Activated B cell treated with CpG ODN at 0.5 μM for 24 hours (primary cell): ENCODE measurements at regions of chr10 and their contacts with region 1.

Region 1: DNA sequence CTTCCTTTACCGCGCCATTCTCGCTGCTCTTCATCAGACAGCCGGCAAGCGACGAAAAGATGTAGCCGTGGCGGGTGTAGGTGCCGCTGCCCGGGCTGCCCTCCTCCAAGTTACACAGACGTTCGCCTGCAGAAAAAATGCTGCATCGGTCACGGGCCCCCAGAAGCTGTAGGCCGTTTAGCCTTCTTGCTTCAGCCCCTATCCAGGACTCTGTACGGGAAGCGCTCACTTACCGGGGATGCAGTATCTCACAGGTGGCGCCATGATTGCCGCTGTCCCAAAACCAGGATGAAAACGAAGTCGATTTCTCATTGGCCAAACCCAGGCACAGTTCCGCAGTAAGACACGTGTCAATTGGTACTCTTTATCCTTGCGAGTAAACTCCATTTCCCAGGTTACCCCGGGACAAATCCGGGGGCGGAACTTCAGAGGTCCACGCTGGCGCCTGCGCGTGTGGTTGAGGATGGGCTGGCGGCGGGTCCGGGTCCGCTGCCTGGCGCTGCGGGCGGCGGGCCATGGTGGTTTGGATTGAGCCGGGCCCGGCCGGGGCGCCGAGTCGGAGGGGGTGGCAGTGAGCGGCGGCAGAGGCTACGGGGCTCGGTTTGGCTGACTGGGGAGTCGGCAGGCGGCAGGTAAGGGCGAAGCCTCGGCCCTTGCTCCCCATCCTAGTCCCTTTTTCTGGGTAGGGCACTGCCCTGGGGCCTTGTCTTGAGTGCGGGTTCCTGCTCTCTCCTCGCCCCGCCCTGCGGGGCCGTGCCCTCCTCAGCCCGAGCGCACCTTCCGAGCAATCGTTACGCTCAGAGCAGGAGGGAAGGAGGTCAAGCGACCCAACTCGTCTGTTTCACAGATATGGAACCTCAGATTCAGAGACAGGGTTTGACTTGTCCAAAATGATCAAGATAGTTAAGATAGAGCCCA is at the starts of genes EXOSC1 and ZDHHC16:
- DNase-seq: peak; percentile 80
- ATAC-seq: peak; percentile 98
- H3K4me3 Mint-ChIP-seq: peak within 1 kb of the TSS; percentile 99
- H3K27ac Mint-ChIP-seq: peak within 1 kb of the TSS; percentile 93
- H3K4me1 Mint-ChIP-seq: peaks cover 43% of the 10 kb centered on the region
- H3K27me3 Mint-ChIP-seq: no peaks in the 10 kb centered on the region
- CTCF ChIP-seq: no peak
- total RNA-seq, gene EXOSC1: 47.4 and 53.8 TPM in 2 replicates
- total RNA-seq, gene ZDHHC16: 39.0 and 40.6 TPM in 2 replicates

Region 2: DNA sequence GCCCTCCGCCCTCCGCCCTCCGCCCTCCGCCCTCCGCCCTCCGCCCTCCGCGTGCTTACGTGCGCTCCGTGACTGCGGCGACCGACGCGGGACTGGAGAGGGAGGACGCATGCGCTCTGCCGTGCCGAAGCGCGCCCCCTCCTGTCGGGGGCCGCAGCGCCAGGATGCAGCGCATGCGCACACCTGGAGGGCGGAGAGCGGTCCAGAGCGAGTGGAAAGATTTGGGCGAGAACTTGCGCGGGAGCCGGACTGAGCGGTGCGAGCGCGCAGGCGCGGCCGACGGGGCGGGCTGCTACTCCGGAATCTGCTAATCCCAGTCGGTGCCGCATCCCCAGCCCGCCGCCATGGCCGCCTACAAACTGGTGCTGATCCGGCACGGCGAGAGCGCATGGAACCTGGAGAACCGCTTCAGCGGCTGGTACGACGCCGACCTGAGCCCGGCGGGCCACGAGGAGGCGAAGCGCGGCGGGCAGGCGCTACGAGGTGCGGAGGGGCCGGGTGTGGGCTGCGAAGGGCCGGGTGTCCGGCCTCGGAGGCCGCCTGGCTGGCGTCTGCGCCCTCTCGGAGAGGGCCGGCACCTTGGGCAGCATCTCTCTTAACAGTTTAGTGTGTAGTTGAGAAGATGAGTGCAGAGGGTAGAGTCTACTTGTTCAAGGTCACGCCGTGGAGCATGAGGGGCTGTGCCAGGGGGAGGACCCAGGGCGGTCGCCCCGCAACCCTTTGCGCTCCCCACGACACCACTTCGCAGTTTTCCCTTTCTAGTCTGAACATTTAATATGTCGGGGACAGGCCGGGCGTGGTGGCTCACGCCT is 19.8 kb before region 1 on chr10 and contains the start of gene PGAM1:
- CTCF ChIA-PET with region 1: no interaction called
- POLR2A ChIA-PET with region 1: no interaction called
- intact Hi-C with region 1: loop called (anchors 1 kb)
- DNase-seq: peak; percentile 97
- ATAC-seq: peak; percentile 88
- H3K4me3 Mint-ChIP-seq: peak within 1 kb of the TSS; percentile 92
- H3K27ac Mint-ChIP-seq: peak within 1 kb of the TSS; percentile 94
- H3K4me1 Mint-ChIP-seq: peaks cover 43% of the 10 kb centered on the region
- H3K27me3 Mint-ChIP-seq: no peaks in the 10 kb centered on the region
- CTCF ChIP-seq: no peak
- total RNA-seq, gene PGAM1: 162 and 166 TPM in 2 replicates

Region 3: GRCh38 chr10:97561678-97562077 is 115.7 kb after region 1 on chr10:
- CTCF ChIA-PET with region 1: no interaction called
- POLR2A ChIA-PET with region 1: no interaction called
- intact Hi-C with region 1: no loop called
- DNase-seq: no peak
- ATAC-seq: no peak
- H3K4me3 Mint-ChIP-seq: no peak overlapping the region
- H3K27ac Mint-ChIP-seq: no peak overlapping the region
- H3K4me1 Mint-ChIP-seq: no peaks in the 10 kb centered on the region
- H3K27me3 Mint-ChIP-seq: no peaks in the 10 kb centered on the region
- CTCF ChIP-seq: no peak

Region 4: GRCh38 chr10:97632949-97633884 is 187.2 kb after region 1 on chr10 and contains the start of gene MORN4:
- CTCF ChIA-PET with region 1: no interaction called
- POLR2A ChIA-PET with region 1: no interaction called
- intact Hi-C with region 1: loop called (anchors 5 kb)
- DNase-seq: peak; percentile 84
- ATAC-seq: peak; percentile 99
- H3K4me3 Mint-ChIP-seq: peak within 1 kb of the TSS; percentile 100
- H3K27ac Mint-ChIP-seq: peak within 1 kb of the TSS; percentile 83
- H3K4me1 Mint-ChIP-seq: peaks cover 16% of the 10 kb centered on the region
- H3K27me3 Mint-ChIP-seq: no peaks in the 10 kb centered on the region
- CTCF ChIP-seq: no peak
- total RNA-seq, gene MORN4: 1.5 and 2.9 TPM in 2 replicates